ENCODE measurements at regions of chr14 and their contacts with region 1.

Region 1: GRCh38 chr14:29548948-29549370 is 378.7 kb downstream of the PRKD1 start:
- DNase-seq: peak; percentile 4
- H3K4me3 ChIP-seq: no peak overlapping the region
- H3K27ac ChIP-seq: no peak overlapping the region
- H3K4me1 ChIP-seq: no peaks in the 10 kb centered on the region
- H3K27me3 ChIP-seq: no peaks in the 10 kb centered on the region
- CTCF ChIP-seq: peak; percentile 10 to 44 (median 17)

Region 2: DNA sequence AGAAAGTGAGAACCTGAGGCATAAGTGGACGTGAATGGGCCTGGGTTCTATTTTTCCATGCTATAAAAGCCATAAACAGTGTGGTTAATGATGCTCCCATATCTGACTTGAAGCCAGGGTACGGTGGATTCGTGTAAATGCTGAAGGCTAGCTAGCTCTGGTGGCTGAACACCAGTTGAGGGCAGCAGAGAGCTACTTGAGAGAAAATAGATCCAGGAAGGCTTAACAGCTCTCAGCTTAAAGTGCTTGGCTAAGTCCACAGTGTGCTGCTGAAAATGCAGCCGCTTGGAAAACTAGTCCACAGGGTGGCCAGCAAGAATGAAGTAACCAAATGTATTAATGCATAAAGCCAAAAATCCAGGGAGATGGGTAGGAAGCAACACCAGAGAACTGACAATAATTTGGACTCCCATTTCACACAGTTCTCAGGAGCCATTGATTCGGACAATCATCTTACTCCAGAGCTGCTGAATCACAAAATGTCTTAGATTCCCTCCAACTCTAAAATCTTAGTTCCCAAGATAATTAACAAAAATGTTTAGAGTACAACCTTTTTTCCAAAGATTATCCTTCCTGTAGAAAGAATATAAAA is 797.4 kb before region 1 on chr14:
- dilution Hi-C with region 1: loop called (anchors 25 kb)
- DNase-seq: no peak
- H3K4me3 ChIP-seq: no peak overlapping the region
- H3K27ac ChIP-seq: no peak overlapping the region
- H3K4me1 ChIP-seq: no peaks in the 10 kb centered on the region
- H3K27me3 ChIP-seq: peaks cover 22% of the 10 kb centered on the region
- CTCF ChIP-seq: peak; percentile 79 to 83 (median 81)

Region 3: GRCh38 chr14:29799464-29800095 is 250.6 kb after region 1 on chr14:
- dilution Hi-C with region 1: no loop called
- DNase-seq: no peak
- H3K4me3 ChIP-seq: no peak overlapping the region
- H3K27ac ChIP-seq: no peak overlapping the region
- H3K4me1 ChIP-seq: no peaks in the 10 kb centered on the region
- H3K27me3 ChIP-seq: no peaks in the 10 kb centered on the region
- CTCF ChIP-seq: no peak

Region 4: GRCh38 chr14:30770376-30770775 is 1221.4 kb after region 1 on chr14:
- dilution Hi-C with region 1: no loop called
- DNase-seq: no peak
- H3K4me3 ChIP-seq: no peak overlapping the region
- H3K27ac ChIP-seq: no peak overlapping the region
- H3K4me1 ChIP-seq: no peaks in the 10 kb centered on the region
- H3K27me3 ChIP-seq: peaks cover 18% of the 10 kb centered on the region
- CTCF ChIP-seq: no peak